GM12878 (cell line): ENCODE measurements at regions of chr15 and their contacts with region 1.

Region 1: DNA sequence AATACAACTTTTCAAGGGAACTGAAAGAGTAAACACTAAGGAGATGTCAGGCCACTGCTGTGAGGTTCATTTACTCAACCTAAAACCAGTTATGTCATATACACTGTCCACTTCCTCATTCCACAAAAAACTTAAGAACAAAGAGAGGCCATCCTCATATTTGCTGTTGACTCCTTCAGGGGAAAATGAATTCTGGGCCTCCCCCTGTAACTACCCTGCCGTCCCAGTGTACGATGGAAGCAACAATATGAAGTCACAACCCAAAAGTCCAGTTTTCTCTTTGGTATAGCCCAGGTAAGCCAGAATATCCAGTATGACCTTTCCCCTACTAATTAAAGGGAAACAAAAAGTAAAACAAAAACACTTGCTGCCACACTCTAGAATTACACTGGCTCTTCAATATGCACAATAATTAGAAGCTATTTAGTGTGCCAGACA is 16.2 kb downstream of the CEP152 start:
- DNase-seq: peak; percentile 69
- ATAC-seq: peak; percentile 97
- H3K4me3 ChIP-seq: peak overlapping the region; percentile 20; the same call in 1 of the 2 replicates
- H3K27ac ChIP-seq: peak overlapping the region; percentile 94
- H3K4me1 ChIP-seq: peaks cover 9% of the 10 kb centered on the region
- H3K27me3 ChIP-seq: no peaks in the 10 kb centered on the region
- CTCF ChIP-seq: no peak
- EP300 ChIP-seq: peak; percentile 83 to 96; a peak in 3 of 4 replicates
- POLR2A ChIP-seq: no peak
- RAD21 ChIP-seq: no peak

Region 2: GRCh38 chr15:48507416-48508065 is 287.2 kb before region 1 on chr15:
- CTCF ChIA-PET with region 1: no interaction called
- POLR2A ChIA-PET with region 1: no interaction called
- RAD21 ChIA-PET with region 1: no interaction called
- SMC1A ChIA-PET with region 1: no interaction called
- in situ Hi-C with region 1: no loop called
- intact Hi-C with region 1: loop called (anchors 10 kb)
- DNase-seq: peak; percentile 8
- ATAC-seq: peak; percentile 96
- H3K4me3 ChIP-seq: no peak overlapping the region
- H3K27ac ChIP-seq: no peak overlapping the region
- H3K4me1 ChIP-seq: no peaks in the 10 kb centered on the region
- H3K27me3 ChIP-seq: no peaks in the 10 kb centered on the region
- CTCF ChIP-seq: peak; percentile 61 to 87 (median 79)
- EP300 ChIP-seq: no peak
- POLR2A ChIP-seq: no peak
- RAD21 ChIP-seq: peak; percentile 51

Region 3: DNA sequence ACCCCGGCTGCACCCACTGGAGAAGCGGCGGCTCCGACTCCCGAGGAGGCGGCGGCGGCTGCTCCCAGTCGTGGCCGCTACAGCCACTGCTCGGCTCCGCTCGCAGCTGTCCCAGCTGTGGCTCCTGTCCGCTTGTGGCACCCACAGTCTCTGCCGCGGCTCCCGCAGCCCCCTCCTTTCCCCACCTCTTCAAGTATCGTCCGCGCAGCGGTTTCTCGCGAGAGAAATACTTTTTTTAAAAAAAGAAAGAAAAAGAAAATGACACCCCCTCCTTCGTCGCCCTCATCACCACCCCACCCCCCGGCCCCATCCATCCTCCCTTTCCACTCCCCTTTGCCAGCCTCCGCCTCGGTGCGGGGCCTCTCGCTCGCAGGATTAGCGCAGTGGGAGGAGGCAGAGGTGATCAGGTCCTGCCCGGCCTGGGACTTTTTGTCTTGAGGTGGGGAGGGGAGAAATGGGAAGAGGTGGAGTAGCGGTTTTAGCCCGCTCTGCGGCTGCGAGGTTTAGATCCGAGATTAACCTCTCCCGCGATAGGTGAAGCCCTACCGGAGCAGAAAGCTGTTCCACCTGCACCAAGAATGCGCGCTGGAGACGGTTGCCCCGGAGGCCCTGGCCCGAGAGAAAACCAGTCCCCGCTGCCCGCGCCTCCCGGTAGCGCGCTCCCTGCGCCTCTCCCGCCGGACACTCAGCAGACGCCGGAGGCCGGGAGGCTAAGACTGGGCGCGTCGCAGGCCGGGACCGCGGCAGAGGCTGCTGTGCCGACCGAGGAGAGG is 149.0 kb before region 1 on chr15 and contains the start of gene FBN1:
- CTCF ChIA-PET with region 1: no interaction called
- POLR2A ChIA-PET with region 1: no interaction called
- RAD21 ChIA-PET with region 1: no interaction called
- SMC1A ChIA-PET with region 1: no interaction called
- in situ Hi-C with region 1: no loop called
- intact Hi-C with region 1: loop called (anchors 5 kb)
- DNase-seq: peak; percentile 33
- ATAC-seq: peak; percentile 80
- H3K4me3 ChIP-seq: peak within 1 kb of the TSS; percentile 79
- H3K27ac ChIP-seq: peak within 1 kb of the TSS; percentile 56
- H3K4me1 ChIP-seq: peaks cover 8% of the 10 kb centered on the region; the same call in 1 of the 2 replicates
- H3K27me3 ChIP-seq: no peaks in the 10 kb centered on the region
- CTCF ChIP-seq: no peak
- EP300 ChIP-seq: no peak
- POLR2A ChIP-seq: peak; percentile 89
- RAD21 ChIP-seq: no peak
- polyA plus RNA-seq, gene FBN1: 2.2 to 2.6 TPM

Region 4: GRCh38 chr15:48810414-48811317 is 15.9 kb after region 1 on chr15 and contains the start of gene CEP152:
- CTCF ChIA-PET with region 1: interaction called, 20 read pairs
- POLR2A ChIA-PET with region 1: interaction called, 19 read pairs
- RAD21 ChIA-PET with region 1: interaction called, 11 read pairs
- SMC1A ChIA-PET with region 1: interaction called, 27 read pairs
- in situ Hi-C with region 1: no loop called
- intact Hi-C with region 1: no loop called
- DNase-seq: peak; percentile 98
- ATAC-seq: peak; percentile 94
- H3K4me3 ChIP-seq: peak within 1 kb of the TSS; percentile 79
- H3K27ac ChIP-seq: peak within 1 kb of the TSS; percentile 73
- H3K4me1 ChIP-seq: 0 out of 2 replicates have a peak, but pooled peaks cover 2% of the 10 kb centered on the region
- H3K27me3 ChIP-seq: no peaks in the 10 kb centered on the region; a peak in 1 of 4 replicates
- CTCF ChIP-seq: no peak
- EP300 ChIP-seq: no peak
- POLR2A ChIP-seq: peak; percentile 87
- RAD21 ChIP-seq: no peak
- polyA plus RNA-seq, gene CEP152: 5.3 to 5.7 TPM